ENCODE measurements at regions of chr5 and their contacts with region 1.

Region 1: DNA sequence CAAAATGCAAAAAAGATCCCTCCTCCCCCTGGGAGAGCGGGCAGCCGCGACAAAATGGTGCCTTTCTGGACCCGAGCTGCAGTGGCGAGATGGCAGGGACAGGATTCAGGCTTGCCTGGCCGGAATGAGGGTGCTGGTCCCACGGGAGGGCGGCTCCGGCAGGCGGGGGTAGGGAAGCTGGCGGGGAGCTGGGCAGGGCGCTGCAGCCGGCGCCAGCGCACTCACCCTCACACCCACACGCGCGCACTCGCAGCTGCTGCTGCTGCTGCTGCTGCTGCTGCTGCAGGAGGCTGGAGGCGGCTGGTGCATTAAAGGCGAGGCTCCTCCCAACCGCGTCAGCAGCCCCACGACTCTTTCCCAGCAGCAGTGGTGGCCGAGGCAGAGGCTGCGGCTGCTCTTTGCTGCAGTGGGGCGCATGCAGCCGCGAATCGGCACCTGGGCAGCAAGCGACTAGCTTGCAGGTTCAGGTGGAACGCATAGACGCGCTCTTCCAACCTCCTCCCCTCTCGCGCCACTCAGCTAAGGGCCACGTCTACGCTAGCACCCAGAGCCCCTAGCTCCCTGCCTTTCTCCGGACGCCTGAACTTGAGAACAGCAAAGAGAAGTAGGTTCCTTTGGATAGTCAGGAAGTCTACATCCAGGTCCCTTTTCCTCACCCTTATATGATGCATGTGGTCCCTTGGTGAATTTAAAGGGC is at the start of gene PPP2R2B:
- DNase-seq: peak; percentile 59 to 62
- H3K4me3 ChIP-seq: peak within 1 kb of the TSS; percentile 54
- H3K4me3 Mint-ChIP-seq: peak within 1 kb of the TSS; percentile 81
- H3K27ac Mint-ChIP-seq: no peak within 1 kb of the TSS
- H3K4me1 ChIP-seq: peaks cover 6% of the 10 kb centered on the region; the same call in 1 of the 2 replicates
- H3K4me1 Mint-ChIP-seq: peaks cover 4% of the 10 kb centered on the region
- H3K27me3 ChIP-seq: no peaks in the 10 kb centered on the region
- H3K27me3 Mint-ChIP-seq: peaks cover 23% of the 10 kb centered on the region
- CTCF ChIP-seq: no peak
- total RNA-seq, gene PPP2R2B: 6.9 and 9.8 TPM in 2 replicates

Region 2: DNA sequence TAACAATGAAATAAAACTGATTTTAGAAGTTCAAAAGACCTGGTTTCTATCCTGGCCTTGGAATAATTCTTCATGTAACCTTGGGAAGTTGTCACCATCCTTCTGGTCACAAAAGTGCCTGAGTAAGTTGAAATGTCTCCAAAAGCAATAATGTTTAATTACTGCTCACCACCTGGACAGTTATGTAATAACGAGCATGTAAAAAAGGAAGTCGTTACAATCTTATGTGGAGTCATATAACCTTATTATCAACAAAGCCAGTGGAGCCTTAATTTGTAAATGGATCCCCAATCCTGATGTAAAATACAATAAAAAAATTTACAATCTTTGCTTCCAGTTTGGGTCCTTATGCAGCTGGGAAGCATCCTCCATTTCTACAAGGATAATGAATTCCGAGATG is 298.4 kb before region 1 on chr5:
- CTCF ChIA-PET with region 1: no interaction called
- POLR2A ChIA-PET with region 1: no interaction called
- intact Hi-C with region 1: no loop called
- DNase-seq: no peak
- H3K4me3 ChIP-seq: no peak overlapping the region
- H3K4me3 Mint-ChIP-seq: no peak overlapping the region
- H3K27ac Mint-ChIP-seq: no peak overlapping the region
- H3K4me1 ChIP-seq: no peaks in the 10 kb centered on the region
- H3K4me1 Mint-ChIP-seq: no peaks in the 10 kb centered on the region
- H3K27me3 ChIP-seq: no peaks in the 10 kb centered on the region; the same call in none of the 2 replicates
- H3K27me3 Mint-ChIP-seq: peaks cover 9% of the 10 kb centered on the region
- CTCF ChIP-seq: no peak

Region 3: DNA sequence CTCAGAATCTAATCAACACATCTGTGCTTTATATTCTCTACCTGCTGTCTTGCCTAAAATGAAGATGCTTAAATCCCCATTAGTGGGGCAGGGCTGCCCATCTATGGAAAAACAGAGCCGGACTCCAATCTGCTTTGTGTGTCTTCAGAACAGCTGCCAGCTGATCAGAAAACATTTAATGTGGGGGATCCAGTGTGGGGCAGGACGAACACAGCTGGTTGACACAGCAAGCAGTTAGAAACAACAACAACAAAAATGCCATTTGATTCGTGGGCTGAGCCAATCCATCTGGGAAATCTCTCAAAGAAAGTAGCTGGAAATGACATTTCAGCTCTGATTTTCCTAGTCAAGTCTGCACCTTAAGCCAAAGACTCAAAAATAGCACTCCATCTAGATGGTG is 99.8 kb before region 1 on chr5:
- CTCF ChIA-PET with region 1: no interaction called
- POLR2A ChIA-PET with region 1: no interaction called
- intact Hi-C with region 1: no loop called
- DNase-seq: no peak
- H3K4me3 ChIP-seq: no peak overlapping the region
- H3K4me3 Mint-ChIP-seq: no peak overlapping the region
- H3K27ac Mint-ChIP-seq: no peak overlapping the region
- H3K4me1 ChIP-seq: no peaks in the 10 kb centered on the region
- H3K4me1 Mint-ChIP-seq: no peaks in the 10 kb centered on the region
- H3K27me3 ChIP-seq: no peaks in the 10 kb centered on the region
- H3K27me3 Mint-ChIP-seq: peaks cover 5% of the 10 kb centered on the region
- CTCF ChIP-seq: no peak

Region 4: DNA sequence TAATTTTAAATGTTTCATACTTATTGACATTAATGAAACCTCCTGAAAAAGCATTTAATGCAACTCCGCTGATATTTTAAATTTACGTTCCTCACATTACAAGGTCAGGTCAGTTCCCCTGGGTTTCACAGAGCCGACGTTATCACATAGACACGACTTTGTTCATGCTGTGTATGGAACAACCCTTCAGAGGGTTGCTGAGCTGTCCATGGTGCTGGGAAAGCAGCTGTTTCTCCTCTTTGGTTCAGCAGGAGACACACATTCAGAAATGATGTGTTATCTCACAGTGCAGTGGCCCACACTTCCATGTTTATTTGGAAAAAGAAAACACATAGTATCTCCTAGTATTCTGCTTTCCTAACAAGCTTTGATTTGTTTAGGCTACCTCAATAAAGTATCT is 53.6 kb before region 1 on chr5:
- CTCF ChIA-PET with region 1: no interaction called
- POLR2A ChIA-PET with region 1: no interaction called
- intact Hi-C with region 1: loop called (anchors 5 kb)
- DNase-seq: peak; percentile 53 to 70
- H3K4me3 ChIP-seq: no peak overlapping the region
- H3K4me3 Mint-ChIP-seq: no peak overlapping the region
- H3K27ac Mint-ChIP-seq: no peak overlapping the region
- H3K4me1 ChIP-seq: no peaks in the 10 kb centered on the region
- H3K4me1 Mint-ChIP-seq: peaks cover 14% of the 10 kb centered on the region
- H3K27me3 ChIP-seq: no peaks in the 10 kb centered on the region
- H3K27me3 Mint-ChIP-seq: peaks cover 8% of the 10 kb centered on the region
- CTCF ChIP-seq: no peak

Region 5: DNA sequence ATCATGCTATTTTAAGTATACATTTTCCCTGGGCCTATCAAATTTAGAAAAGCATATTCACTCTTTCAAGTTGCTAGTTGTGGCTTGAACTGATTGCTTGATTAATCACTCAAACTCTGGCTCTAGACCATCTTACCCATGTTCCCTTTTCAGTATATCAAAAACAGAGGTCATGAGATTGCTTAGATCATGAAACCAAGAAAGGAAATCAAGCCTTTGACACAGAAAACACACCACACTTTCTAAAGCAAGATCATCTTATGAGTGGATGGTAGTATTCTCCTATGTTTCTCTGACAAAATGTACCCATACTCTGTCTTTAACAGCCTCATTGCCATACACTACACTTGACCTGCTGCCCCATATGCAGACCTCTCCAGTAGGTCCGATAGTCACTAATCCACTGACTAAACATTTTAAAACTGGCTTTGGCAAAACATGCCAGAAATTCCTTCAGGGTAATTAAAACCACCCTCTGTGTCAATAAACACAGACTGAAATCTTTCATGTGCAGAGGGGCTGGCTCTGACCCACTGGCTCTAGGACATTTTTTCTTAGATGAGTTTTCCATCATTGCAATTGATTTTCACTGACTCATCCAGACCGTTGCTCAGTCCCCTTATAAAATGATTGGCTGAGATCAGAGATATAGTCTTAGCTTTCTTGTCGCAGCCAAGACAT is 18.3 kb before region 1 on chr5:
- CTCF ChIA-PET with region 1: no interaction called
- POLR2A ChIA-PET with region 1: no interaction called
- intact Hi-C with region 1: no loop called
- DNase-seq: peak; percentile 57 to 69
- H3K4me3 ChIP-seq: no peak overlapping the region
- H3K4me3 Mint-ChIP-seq: peak overlapping the region; percentile 34
- H3K27ac Mint-ChIP-seq: peak overlapping the region; percentile 76
- H3K4me1 ChIP-seq: peaks cover 20% of the 10 kb centered on the region
- H3K4me1 Mint-ChIP-seq: peaks cover 25% of the 10 kb centered on the region
- H3K27me3 ChIP-seq: no peaks in the 10 kb centered on the region
- H3K27me3 Mint-ChIP-seq: no peaks in the 10 kb centered on the region
- CTCF ChIP-seq: no peak

Region 6: GRCh38 chr5:146890733-146891440 is 12.3 kb after region 1 on chr5:
- CTCF ChIA-PET with region 1: no interaction called
- POLR2A ChIA-PET with region 1: no interaction called
- intact Hi-C with region 1: no loop called
- DNase-seq: no peak
- H3K4me3 ChIP-seq: no peak overlapping the region
- H3K4me3 Mint-ChIP-seq: no peak overlapping the region
- H3K27ac Mint-ChIP-seq: no peak overlapping the region
- H3K4me1 ChIP-seq: 0 out of 2 replicates have a peak, but pooled peaks cover 8% of the 10 kb centered on the region
- H3K4me1 Mint-ChIP-seq: peaks cover 15% of the 10 kb centered on the region
- H3K27me3 ChIP-seq: no peaks in the 10 kb centered on the region
- H3K27me3 Mint-ChIP-seq: no peaks in the 10 kb centered on the region
- CTCF ChIP-seq: no peak